ENCODE measurements at regions of chr5 and their contacts with region 1.

Region 1: GRCh38 chr5:172714491-172715421 is 56.2 kb downstream of the DUSP1 start:
- DNase-seq: peak; percentile 91 to 93
- ATAC-seq: peak; percentile 83
- H3K4me3 ChIP-seq: no peak overlapping the region
- H3K27ac ChIP-seq: peak overlapping the region in 1 of 2 donors; percentile 53
- H3K4me1 ChIP-seq: peaks cover 0 to 2% of the 10 kb centered on the region in 2 donors
- H3K27me3 ChIP-seq: no peaks in the 10 kb centered on the region

Region 2: GRCh38 chr5:172454358-172455086 is 260.2 kb before region 1 on chr5 and contains the start of gene SH3PXD2B:
- intact Hi-C with region 1: no loop called
- DNase-seq: peak; percentile 75 to 88
- ATAC-seq: peak; percentile 31
- H3K4me3 ChIP-seq: peak within 1 kb of the TSS; percentile 90 to 92
- H3K27ac ChIP-seq: peak within 1 kb of the TSS in 1 of 2 donors; percentile 89
- H3K4me1 ChIP-seq: no peaks in the 10 kb centered on the region
- H3K27me3 ChIP-seq: no peaks in the 10 kb centered on the region
- total RNA-seq, gene SH3PXD2B: 43.3 to 69.1 TPM

Region 3: DNA sequence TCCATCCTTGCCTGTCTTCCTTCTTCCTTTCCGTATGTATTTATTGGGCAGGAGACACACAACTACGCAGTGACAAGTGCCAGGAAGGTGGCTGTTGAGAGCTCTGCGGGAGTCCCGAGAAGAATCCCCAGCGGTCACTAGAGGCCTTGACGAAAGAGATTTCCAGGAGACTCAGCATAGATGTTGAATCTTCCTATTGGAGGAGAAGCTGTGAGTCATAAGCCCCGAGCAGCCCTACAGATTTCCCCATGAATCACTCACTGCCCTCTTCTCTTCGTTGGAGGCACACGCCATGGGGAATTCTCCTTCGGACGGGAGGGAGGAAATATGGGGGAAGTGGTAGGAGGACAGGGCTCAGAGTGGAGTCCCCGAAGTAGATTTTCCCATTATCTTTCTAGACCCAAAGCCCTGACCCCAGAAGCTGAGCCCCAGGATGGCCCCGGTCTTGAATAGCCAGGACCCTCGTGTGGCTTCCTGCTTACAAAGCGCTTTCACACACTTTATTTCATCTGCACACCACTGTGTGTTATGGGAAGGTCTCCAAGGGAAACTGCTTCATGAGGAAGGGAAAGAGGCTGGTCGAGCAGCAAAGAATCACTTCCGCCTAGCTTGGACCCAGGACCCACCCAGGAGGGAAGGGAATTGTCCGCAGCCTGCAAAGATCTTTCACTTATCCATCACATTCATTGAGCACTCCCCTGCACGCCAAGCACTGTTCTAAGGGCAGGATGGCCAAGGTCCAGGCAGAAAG is 43.5 kb after region 1 on chr5:
- intact Hi-C with region 1: loop called in 1 of 2 experiments (anchors 5 kb)
- DNase-seq: peak in 1 of 2 donors; percentile 79
- ATAC-seq: peak; percentile 61
- H3K4me3 ChIP-seq: no peak overlapping the region
- H3K27ac ChIP-seq: peak overlapping the region in 1 of 2 donors; percentile 15
- H3K4me1 ChIP-seq: peaks cover 0 to 2% of the 10 kb centered on the region in 2 donors
- H3K27me3 ChIP-seq: no peaks in the 10 kb centered on the region

Region 4: GRCh38 chr5:172868924-172869591 is 154.3 kb after region 1 on chr5:
- intact Hi-C with region 1: loop called in 1 of 2 experiments (anchors 5 kb)
- DNase-seq: peak; percentile 91 to 94
- ATAC-seq: peak; percentile 89
- H3K4me3 ChIP-seq: no peak overlapping the region
- H3K27ac ChIP-seq: peak overlapping the region; percentile 80 to 91
- H3K4me1 ChIP-seq: peaks cover 3 to 4% of the 10 kb centered on the region in 2 donors
- H3K27me3 ChIP-seq: no peaks in the 10 kb centered on the region

Region 5: DNA sequence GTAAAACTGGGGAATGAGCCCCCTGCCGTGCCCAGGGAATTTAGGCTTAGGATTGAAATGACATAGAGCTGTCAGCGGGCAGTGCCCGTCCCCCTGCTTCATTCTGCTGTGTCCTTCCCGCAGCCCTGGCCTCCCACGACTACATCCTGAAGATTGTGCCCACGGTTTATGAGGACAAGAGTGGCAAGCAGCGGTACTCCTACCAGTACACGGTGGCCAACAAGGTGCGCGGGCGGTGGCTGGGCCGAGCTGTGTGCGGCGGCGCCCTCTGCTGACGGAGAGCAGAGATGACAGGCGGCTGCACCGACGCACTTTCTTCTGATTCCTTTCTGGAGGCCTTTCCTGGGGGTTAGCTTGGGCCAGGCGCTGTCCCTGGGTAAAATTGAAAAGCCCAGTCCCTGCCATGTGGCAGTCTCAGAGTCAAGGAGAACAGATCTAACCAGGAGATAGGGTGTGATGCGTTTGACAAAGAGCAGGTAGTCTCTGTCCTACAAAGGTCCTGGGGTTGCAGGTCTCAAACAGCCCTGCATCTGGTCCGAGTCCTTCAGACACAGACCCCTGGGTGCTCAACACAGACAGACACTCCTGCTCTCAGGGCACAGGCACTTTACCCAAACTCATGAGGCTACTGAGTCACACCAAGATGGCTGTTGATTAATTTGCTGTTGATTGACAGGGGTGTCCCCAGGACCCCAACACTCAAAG is 217.7 kb after region 1 on chr5:
- intact Hi-C with region 1: loop called (anchors 1 to 2 kb)
- DNase-seq: peak; percentile 86 to 94
- ATAC-seq: peak; percentile 93
- H3K4me3 ChIP-seq: no peak overlapping the region
- H3K27ac ChIP-seq: peak overlapping the region; percentile 51 to 97
- H3K4me1 ChIP-seq: peaks cover 0 to 5% of the 10 kb centered on the region in 2 donors
- H3K27me3 ChIP-seq: no peaks in the 10 kb centered on the region

Region 6: DNA sequence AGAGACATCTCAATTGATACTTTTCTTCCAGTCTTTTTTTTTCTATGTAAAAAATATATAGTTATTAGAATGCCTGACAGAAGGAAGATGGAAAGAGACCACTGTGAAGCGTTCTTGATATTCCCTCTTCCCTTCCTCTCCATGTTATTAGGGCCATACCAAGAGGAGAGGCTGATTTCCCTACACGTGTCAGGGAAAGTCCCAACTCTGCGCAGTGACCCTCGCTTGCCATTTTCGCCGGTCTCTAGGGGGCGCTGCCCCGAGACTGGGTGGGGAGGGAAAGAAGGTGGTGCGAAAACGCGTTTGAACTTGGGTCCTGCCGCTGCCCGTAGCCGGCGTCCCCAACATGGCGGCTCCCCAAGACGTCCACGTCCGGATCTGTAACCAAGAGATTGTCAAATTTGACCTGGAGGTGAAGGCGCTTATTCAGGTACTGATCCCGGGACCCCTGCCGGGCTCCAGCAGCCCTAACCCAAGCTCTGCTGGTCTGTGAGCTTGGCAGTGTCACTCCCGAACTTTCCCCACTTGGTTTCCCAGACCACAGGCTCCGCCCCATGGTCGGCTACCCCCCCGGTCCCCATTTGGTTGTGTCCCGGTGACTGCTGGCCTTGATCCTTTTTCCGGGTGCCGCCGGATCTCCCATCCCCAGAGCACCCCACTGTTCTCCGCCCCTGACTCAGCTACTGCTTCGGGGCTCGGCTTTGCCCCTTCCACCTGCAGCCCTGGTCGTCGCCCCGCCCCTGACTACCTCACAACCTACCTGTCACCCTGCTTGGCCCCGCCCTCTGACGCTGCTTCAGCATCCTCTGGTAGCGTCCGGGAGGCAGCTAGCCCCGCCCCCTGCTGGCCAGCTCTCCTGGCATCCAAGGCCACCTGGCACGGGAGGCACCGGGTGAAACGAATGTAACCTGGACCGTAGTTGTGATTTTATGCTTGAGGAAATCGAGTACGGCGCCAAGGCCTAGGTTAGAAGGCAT is 429.7 kb after region 1 on chr5 and contains the start of gene BNIP1:
- intact Hi-C with region 1: loop called in 1 of 2 experiments (anchors 10 kb)
- DNase-seq: peak; percentile 97 to 99
- ATAC-seq: peak; percentile 96
- H3K4me3 ChIP-seq: peak within 1 kb of the TSS; percentile 77 to 78
- H3K27ac ChIP-seq: peak within 1 kb of the TSS in 1 of 2 donors; percentile 9
- H3K4me1 ChIP-seq: no peaks in the 10 kb centered on the region
- H3K27me3 ChIP-seq: no peaks in the 10 kb centered on the region
- total RNA-seq, gene BNIP1: 8.2 to 8.8 TPM

Region 7: GRCh38 chr5:173283318-173284288 is 568.8 kb after region 1 on chr5:
- intact Hi-C with region 1: loop called (anchors 10 kb)
- DNase-seq: peak; percentile 78 to 88
- ATAC-seq: peak; percentile 83
- H3K4me3 ChIP-seq: no peak overlapping the region
- H3K27ac ChIP-seq: no peak overlapping the region
- H3K4me1 ChIP-seq: no peaks in the 10 kb centered on the region
- H3K27me3 ChIP-seq: no peaks in the 10 kb centered on the region

Measured in aorta (tissue), 5 donors.